ENCODE measurements at regions of chr18 and their contacts with region 1.

Region 1: DNA sequence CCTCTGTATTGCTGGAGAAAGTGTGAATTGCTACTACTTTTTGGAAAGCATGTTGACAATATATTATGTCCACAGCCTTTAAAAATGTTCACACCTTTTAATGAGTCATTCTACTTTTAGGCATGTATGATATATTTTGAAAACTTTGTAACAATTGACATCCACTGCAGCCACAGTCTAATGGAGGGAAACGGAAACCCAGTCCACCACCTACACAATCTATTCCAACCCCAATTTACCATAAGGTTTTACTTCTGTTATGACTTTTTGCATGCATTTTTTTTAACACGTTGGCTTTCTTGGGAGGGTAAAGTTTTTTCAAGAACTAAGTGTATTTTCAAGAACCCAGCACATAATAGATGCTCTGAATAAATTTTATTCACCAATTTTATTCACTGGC is 38.5 kb upstream of the ATP8B1 start:
- DNase-seq: peak; percentile 32
- ATAC-seq: peak; percentile 35
- H3K4me3 Mint-ChIP-seq: no peak overlapping the region
- H3K27ac Mint-ChIP-seq: no peak overlapping the region
- H3K4me1 Mint-ChIP-seq: peaks cover 28% of the 10 kb centered on the region
- H3K27me3 Mint-ChIP-seq: peaks cover 39% of the 10 kb centered on the region

Region 2: DNA sequence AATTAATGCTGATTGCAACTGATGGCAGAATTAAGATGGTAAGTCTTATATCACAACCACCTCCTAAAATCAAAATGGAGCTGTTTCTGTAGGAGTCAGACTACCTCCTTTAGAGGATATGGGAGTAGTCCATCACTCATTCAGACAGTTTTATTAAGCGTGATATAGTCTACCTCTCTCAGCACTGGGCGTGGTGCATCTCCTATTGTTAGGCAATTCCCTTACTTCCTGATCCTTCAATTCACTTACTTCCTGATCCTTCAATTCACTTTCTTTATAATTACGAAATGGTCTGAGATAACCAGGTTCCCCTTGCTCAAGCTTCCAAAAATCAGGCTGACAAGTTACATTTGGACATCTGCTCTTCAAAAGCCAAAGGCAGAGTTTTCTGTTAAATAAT is 70.4 kb before region 1 on chr18:
- CTCF ChIA-PET with region 1: no interaction called
- POLR2A ChIA-PET with region 1: no interaction called
- intact Hi-C with region 1: no loop called
- DNase-seq: no peak
- ATAC-seq: no peak
- H3K4me3 Mint-ChIP-seq: no peak overlapping the region
- H3K27ac Mint-ChIP-seq: no peak overlapping the region
- H3K4me1 Mint-ChIP-seq: peaks cover 2% of the 10 kb centered on the region
- H3K27me3 Mint-ChIP-seq: no peaks in the 10 kb centered on the region

Region 3: GRCh38 chr18:58303363-58303762 is 461.8 kb after region 1 on chr18:
- CTCF ChIA-PET with region 1: no interaction called
- POLR2A ChIA-PET with region 1: no interaction called
- intact Hi-C with region 1: loop called in 1 of 2 experiments (anchors 5 kb)
- DNase-seq: peak; percentile 68
- ATAC-seq: peak; percentile 88
- H3K4me3 Mint-ChIP-seq: no peak overlapping the region
- H3K27ac Mint-ChIP-seq: no peak overlapping the region
- H3K4me1 Mint-ChIP-seq: peaks cover 36% of the 10 kb centered on the region
- H3K27me3 Mint-ChIP-seq: peaks cover 4% of the 10 kb centered on the region